Mammary epithelial cell (primary cell): ENCODE measurements at regions of chr3 and their contacts with region 1.

Region 1: GRCh38 chr3:11060500-11061251 is 68.1 kb downstream of the SLC6A1 start:
- DNase-seq: peak; percentile 56
- H3K4me3 ChIP-seq: peak overlapping the region in 2 of 3 experiments; percentile 12 to 25
- H3K27ac ChIP-seq: no peak overlapping the region
- H3K4me1 ChIP-seq: peaks cover 5% of the 10 kb centered on the region
- H3K27me3 ChIP-seq: no peaks in the 10 kb centered on the region
- CTCF ChIP-seq: peak; percentile 60 to 92

Region 2: DNA sequence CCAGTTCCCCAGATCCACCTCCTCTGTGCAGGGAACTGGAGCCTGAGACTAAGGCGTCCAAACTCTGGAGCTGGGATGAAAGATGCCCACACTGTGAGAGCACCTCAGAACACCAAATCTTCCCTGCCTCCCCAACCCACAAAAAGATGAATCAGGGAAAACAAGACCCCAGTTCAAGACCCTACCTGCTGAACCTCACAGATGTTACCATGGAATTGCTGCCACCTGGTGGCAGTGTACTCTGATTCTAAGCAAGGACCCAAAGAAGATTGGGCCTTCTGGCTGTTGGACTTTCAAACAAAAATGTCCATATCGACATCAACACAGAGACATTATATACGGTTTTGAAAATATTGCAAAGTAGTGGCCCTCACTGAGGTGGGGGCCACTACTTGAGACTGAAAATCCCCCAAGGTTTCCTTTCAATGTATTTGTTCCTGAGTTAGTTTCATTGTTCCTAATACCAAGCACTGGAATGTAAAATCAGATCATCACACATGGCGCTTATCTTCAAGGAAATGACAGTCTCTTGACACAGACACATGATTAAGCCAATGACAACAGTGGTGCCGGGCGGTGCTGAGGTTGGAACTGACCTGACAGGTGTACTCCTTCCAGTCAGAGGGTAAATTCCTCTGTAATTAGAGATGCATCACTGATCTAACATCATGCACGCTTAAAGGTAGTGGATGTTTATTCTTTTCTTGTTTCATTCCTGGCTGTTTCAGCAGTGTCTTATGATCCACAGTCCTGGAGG is 177.0 kb before region 1 on chr3:
- CTCF ChIA-PET with region 1: no interaction called
- dilution Hi-C with region 1: no loop called
- in situ Hi-C with region 1: no loop called
- intact Hi-C with region 1: loop called (anchors 1 kb)
- DNase-seq: peak; percentile 43
- H3K4me3 ChIP-seq: no peak overlapping the region
- H3K27ac ChIP-seq: no peak overlapping the region
- H3K4me1 ChIP-seq: peaks cover 23% of the 10 kb centered on the region
- H3K27me3 ChIP-seq: no peaks in the 10 kb centered on the region
- CTCF ChIP-seq: peak; percentile 62 to 72

Region 3: GRCh38 chr3:11140054-11140712 is 79.5 kb after region 1 on chr3:
- CTCF ChIA-PET with region 1: no interaction called
- dilution Hi-C with region 1: no loop called
- in situ Hi-C with region 1: no loop called
- intact Hi-C with region 1: loop called (anchors 5 kb)
- DNase-seq: peak; percentile 19
- H3K4me3 ChIP-seq: no peak overlapping the region
- H3K27ac ChIP-seq: no peak overlapping the region
- H3K4me1 ChIP-seq: peaks cover 26% of the 10 kb centered on the region
- H3K27me3 ChIP-seq: no peaks in the 10 kb centered on the region
- CTCF ChIP-seq: no peak

Region 4: GRCh38 chr3:11201246-11202024 is 140.8 kb after region 1 on chr3:
- CTCF ChIA-PET with region 1: no interaction called
- dilution Hi-C with region 1: no loop called
- in situ Hi-C with region 1: loop called in 1 of 2 experiments (anchors 10 kb)
- intact Hi-C with region 1: loop called (anchors 1 kb)
- DNase-seq: peak; percentile 26
- H3K4me3 ChIP-seq: no peak overlapping the region
- H3K27ac ChIP-seq: no peak overlapping the region
- H3K4me1 ChIP-seq: peaks cover 24% of the 10 kb centered on the region
- H3K27me3 ChIP-seq: no peaks in the 10 kb centered on the region
- CTCF ChIP-seq: no peak

Region 5: DNA sequence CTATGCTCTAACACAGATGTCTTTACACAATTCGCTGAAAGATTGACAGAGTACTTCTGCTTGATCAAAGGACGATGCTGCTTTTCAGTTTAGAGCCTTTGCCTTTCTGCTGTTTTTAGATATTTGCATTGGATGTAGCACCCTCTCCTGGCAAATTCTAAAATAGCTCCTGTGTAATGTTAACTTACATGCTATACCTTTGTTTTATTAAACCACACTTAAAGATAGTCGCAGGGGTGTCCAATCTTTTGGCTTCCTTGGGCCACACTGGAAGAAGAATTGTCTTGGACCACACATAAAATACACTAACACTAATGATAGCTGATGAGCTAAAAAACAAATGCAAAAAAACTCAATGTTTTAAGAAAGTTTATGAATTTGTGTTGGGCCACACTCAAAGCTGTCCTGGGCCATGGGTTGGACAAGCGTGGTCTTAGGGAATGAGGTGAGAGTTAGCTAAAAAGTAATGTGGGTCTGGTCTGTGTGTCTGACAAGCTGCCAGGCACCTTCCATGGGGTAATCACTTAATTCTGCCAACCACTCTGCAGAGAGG is 274.5 kb after region 1 on chr3:
- CTCF ChIA-PET with region 1: interaction called, 3 read pairs
- dilution Hi-C with region 1: loop called (anchors 25 kb)
- in situ Hi-C with region 1: loop called in 1 of 2 experiments (anchors 5 kb)
- intact Hi-C with region 1: loop called (anchors 1 kb)
- DNase-seq: peak; percentile 62
- H3K4me3 ChIP-seq: no peak overlapping the region
- H3K27ac ChIP-seq: no peak overlapping the region
- H3K4me1 ChIP-seq: peaks cover 3% of the 10 kb centered on the region
- H3K27me3 ChIP-seq: no peaks in the 10 kb centered on the region
- CTCF ChIP-seq: peak; percentile 63 to 70